ENCODE measurements at regions of chr3 and their contacts with region 1.

Region 1: DNA sequence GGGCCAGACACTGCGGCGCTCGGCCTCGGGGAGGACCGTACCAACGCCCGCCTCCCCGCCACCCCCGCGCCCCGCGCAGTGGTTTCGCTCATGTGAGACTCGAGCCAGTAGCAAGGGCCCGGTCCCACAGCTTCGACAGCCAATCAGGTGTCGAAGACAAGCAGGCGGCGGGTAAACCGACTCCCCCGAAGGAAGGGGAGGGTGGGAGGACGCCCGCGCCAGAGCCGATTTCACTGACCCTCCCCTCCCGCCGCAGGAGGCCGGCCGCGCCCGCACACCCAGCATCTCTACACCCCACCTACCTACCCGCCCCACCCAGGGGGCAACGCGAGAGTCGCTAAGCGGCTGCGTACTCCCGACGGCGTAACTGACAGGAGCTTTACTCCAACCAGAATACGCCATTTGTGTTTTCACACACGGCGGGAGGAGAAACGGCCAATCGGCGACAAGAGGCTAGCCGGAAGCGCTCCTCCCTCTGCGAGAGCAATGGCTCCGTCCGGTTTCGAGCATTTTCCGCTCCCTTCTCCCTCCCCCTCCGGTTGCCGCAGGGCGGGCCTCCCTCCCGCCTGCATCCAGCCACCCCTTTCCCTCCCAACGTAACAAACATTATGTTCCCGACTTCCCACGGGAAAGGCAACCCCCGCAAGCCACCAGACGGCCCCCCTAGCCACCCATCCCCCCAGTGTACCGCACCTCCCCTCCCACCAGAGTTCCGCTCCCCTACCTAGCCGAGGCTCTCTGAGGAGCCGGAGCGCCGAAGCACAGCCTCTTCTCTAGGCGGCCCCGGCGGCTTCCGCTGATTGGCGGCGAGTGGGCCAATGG is 504 bp upstream of the SETD5 start:
- DNase-seq: peak; percentile 99
- ATAC-seq: peak; percentile 74
- H3K4me3 Mint-ChIP-seq: peak overlapping the region; percentile 93
- H3K27ac Mint-ChIP-seq: peak overlapping the region; percentile 98
- H3K4me1 Mint-ChIP-seq: peaks cover 63% of the 10 kb centered on the region
- H3K27me3 Mint-ChIP-seq: no peaks in the 10 kb centered on the region

Region 2: GRCh38 chr3:8963137-8963869 is 433.6 kb before region 1 on chr3 and contains the start of gene RAD18:
- CTCF ChIA-PET with region 1: no interaction called
- POLR2A ChIA-PET with region 1: no interaction called
- intact Hi-C with region 1: loop called (anchors 1 to 5 kb)
- DNase-seq: peak; percentile 95
- ATAC-seq: peak; percentile 94
- H3K4me3 Mint-ChIP-seq: peak within 1 kb of the TSS; percentile 95
- H3K27ac Mint-ChIP-seq: peak within 1 kb of the TSS; percentile 93
- H3K4me1 Mint-ChIP-seq: peaks cover 32% of the 10 kb centered on the region
- H3K27me3 Mint-ChIP-seq: no peaks in the 10 kb centered on the region
- total RNA-seq, gene RAD18: 47.8 to 50.5 TPM

Region 3: GRCh38 chr3:9373465-9373864 is 23.4 kb before region 1 on chr3:
- CTCF ChIA-PET with region 1: interaction called, 4 read pairs
- POLR2A ChIA-PET with region 1: interaction called, 11 read pairs
- intact Hi-C with region 1: no loop called
- DNase-seq: no peak
- ATAC-seq: no peak
- H3K4me3 Mint-ChIP-seq: no peak overlapping the region
- H3K27ac Mint-ChIP-seq: no peak overlapping the region
- H3K4me1 Mint-ChIP-seq: peaks cover 40% of the 10 kb centered on the region
- H3K27me3 Mint-ChIP-seq: no peaks in the 10 kb centered on the region

Region 4: DNA sequence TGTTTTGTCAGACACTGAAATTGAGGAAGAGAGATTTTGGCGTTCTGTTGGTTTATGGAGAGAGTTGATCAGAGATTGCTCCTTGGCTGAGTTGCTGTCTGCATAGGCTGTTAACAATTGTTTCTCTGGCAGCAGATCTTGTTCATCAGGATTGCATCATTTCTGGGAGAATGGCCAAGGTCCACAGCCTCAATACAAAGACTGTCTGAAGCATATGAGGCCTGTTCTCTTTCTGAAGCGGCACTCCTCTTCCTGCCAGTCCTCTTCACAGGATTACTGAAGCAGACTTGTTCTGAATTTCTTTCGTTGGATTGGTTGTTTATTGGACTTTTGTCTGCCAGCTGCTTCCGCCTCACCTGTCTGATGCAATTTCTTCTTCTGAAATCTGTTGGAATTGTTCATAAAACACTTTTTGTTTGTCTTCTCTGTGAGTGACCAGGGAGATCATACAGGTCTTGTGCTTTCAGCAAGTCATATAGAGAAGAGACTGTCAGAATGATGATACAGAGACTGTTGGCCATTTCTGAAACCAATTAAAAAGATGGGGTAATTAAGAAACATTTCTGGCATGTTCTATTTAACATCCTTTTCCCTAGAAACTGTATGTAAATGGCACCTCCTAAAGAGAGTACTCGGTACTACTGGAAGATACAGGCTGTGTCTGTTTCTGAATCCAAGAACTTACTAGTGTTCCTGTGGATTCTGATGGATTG is 26.0 kb after region 1 on chr3:
- CTCF ChIA-PET with region 1: interaction called, 8 read pairs
- POLR2A ChIA-PET with region 1: interaction called, 15 read pairs
- intact Hi-C with region 1: loop called (anchors 1 to 2 kb)
- DNase-seq: peak; percentile 27
- ATAC-seq: peak; percentile 79
- H3K4me3 Mint-ChIP-seq: peak overlapping the region; percentile 42
- H3K27ac Mint-ChIP-seq: peak overlapping the region; percentile 97
- H3K4me1 Mint-ChIP-seq: peaks cover 49% of the 10 kb centered on the region
- H3K27me3 Mint-ChIP-seq: no peaks in the 10 kb centered on the region

Region 5: GRCh38 chr3:9590282-9590791 is 193.4 kb after region 1 on chr3:
- CTCF ChIA-PET with region 1: no interaction called
- POLR2A ChIA-PET with region 1: no interaction called
- intact Hi-C with region 1: no loop called
- DNase-seq: no peak
- ATAC-seq: no peak
- H3K4me3 Mint-ChIP-seq: no peak overlapping the region
- H3K27ac Mint-ChIP-seq: no peak overlapping the region
- H3K4me1 Mint-ChIP-seq: no peaks in the 10 kb centered on the region
- H3K27me3 Mint-ChIP-seq: peaks cover 7% of the 10 kb centered on the region

Region 6: GRCh38 chr3:9736831-9737230 is 339.9 kb after region 1 on chr3:
- CTCF ChIA-PET with region 1: no interaction called
- POLR2A ChIA-PET with region 1: no interaction called
- intact Hi-C with region 1: no loop called
- DNase-seq: peak; percentile 36
- ATAC-seq: peak; percentile 75
- H3K4me3 Mint-ChIP-seq: no peak overlapping the region
- H3K27ac Mint-ChIP-seq: peak overlapping the region; percentile 72
- H3K4me1 Mint-ChIP-seq: peaks cover 43% of the 10 kb centered on the region
- H3K27me3 Mint-ChIP-seq: no peaks in the 10 kb centered on the region

Region 7: GRCh38 chr3:9749645-9750555 is 353.0 kb after region 1 on chr3 and contains the start of gene OGG1:
- CTCF ChIA-PET with region 1: no interaction called
- POLR2A ChIA-PET with region 1: no interaction called
- intact Hi-C with region 1: loop called (anchors 1 to 5 kb)
- DNase-seq: peak; percentile 98
- ATAC-seq: peak; percentile 94
- H3K4me3 Mint-ChIP-seq: peak within 1 kb of the TSS; percentile 87
- H3K27ac Mint-ChIP-seq: peak within 1 kb of the TSS; percentile 91
- H3K4me1 Mint-ChIP-seq: peaks cover 46% of the 10 kb centered on the region
- H3K27me3 Mint-ChIP-seq: no peaks in the 10 kb centered on the region
- total RNA-seq, gene OGG1: 36.4 to 61.6 TPM

Region 8: DNA sequence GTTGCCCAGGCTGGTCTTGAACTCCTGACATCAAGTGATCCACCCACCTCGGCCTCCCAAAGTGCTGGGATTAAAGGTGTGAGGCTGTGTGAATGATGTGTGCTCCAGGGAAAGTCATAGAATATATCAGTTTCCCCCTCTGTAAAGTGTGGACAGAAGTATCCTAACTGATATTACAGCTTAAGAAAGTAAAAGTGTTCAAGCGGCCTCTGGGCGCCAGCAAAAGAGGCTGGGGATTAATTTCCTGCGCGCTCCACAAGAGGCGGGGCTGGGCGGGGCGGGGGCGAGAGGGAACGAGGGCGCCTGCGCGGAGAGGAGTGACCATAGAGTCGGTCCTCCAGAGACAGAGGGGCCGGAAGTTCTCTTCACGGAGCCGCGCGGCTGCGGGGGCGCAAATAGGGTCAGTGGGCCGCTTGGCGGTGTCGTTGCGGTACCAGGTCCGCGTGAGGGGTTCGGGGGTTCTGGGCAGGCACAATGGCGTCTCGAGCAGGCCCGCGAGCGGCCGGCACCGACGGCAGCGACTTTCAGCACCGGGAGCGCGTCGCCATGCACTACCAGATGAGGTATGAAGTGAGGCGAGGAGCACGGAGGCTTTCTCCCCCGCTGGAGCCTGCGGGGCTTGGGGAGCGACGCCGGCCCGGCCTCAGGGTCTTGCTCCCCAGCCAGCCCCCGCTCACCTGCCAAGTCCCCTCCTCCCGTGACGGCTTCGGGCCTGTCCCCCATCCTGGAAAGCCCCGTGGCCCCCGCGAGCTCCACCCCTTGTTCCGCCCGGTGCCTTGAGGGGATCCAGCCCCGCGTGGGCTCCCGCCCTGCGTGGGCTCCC is 493.5 kb after region 1 on chr3 and contains the start of gene JAGN1:
- CTCF ChIA-PET with region 1: no interaction called
- POLR2A ChIA-PET with region 1: interaction called, 7 read pairs
- intact Hi-C with region 1: loop called in 1 of 2 experiments (anchors 2 kb)
- DNase-seq: peak; percentile 96
- ATAC-seq: peak; percentile 82
- H3K4me3 Mint-ChIP-seq: peak within 1 kb of the TSS; percentile 96
- H3K27ac Mint-ChIP-seq: peak within 1 kb of the TSS; percentile 98
- H3K4me1 Mint-ChIP-seq: peaks cover 34% of the 10 kb centered on the region
- H3K27me3 Mint-ChIP-seq: no peaks in the 10 kb centered on the region
- total RNA-seq, gene JAGN1: 27.1 to 33.0 TPM

Region 9: DNA sequence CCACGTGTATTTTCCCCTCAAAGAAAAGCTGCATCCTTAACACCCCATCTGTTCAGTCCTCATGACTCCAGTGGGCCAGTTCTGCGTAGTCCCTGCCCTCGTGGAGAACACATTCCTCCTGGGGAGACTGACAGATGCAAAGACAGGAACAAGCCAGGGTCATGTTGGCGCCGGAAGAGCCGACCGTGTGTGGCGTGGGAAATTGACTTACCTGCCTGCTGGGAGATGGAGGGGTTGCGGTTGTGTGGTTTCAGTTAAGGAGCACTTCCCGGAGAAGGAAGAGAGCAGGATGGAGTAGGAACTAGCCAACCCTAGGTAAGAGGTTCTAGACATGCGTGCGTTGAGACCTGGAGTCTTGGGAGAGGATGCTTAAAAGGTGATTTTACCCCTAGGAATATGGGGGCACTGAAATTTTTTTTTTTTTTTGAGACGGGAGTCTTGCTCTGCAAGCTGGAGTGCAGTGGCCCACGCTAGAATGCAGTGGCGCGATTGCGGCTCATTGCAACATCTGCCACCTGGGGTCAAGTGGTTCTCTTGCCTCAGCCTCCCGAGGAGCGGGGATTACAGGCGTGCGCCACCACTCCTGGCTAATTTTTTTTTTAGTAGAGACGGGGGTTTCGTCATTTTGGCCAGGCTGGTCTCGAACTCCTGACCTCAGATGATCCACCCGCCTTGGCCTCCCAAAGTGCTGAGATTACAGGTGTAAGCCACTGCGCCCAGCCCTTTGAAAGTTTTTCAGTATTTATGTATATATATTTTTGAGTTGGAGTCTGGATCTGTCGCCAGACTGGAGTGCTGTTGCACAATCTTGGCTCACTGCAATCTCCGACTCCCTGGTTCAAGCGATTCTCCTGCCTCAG is 746.0 kb after region 1 on chr3:
- CTCF ChIA-PET with region 1: no interaction called
- POLR2A ChIA-PET with region 1: no interaction called
- intact Hi-C with region 1: loop called in 1 of 2 experiments (anchors 5 kb)
- DNase-seq: peak; percentile 57
- ATAC-seq: peak; percentile 15
- H3K4me3 Mint-ChIP-seq: peak overlapping the region; percentile 97
- H3K27ac Mint-ChIP-seq: peak overlapping the region; percentile 89
- H3K4me1 Mint-ChIP-seq: peaks cover 28% of the 10 kb centered on the region
- H3K27me3 Mint-ChIP-seq: no peaks in the 10 kb centered on the region

Measured in activated CD4-positive, alpha-beta T cell treated with anti-CD3 and anti-CD28 coated beads for 36 hours (primary cell).